GM18951 (cell line): ENCODE measurements at regions of chr3 and their contacts with region 1.

Region 1: DNA sequence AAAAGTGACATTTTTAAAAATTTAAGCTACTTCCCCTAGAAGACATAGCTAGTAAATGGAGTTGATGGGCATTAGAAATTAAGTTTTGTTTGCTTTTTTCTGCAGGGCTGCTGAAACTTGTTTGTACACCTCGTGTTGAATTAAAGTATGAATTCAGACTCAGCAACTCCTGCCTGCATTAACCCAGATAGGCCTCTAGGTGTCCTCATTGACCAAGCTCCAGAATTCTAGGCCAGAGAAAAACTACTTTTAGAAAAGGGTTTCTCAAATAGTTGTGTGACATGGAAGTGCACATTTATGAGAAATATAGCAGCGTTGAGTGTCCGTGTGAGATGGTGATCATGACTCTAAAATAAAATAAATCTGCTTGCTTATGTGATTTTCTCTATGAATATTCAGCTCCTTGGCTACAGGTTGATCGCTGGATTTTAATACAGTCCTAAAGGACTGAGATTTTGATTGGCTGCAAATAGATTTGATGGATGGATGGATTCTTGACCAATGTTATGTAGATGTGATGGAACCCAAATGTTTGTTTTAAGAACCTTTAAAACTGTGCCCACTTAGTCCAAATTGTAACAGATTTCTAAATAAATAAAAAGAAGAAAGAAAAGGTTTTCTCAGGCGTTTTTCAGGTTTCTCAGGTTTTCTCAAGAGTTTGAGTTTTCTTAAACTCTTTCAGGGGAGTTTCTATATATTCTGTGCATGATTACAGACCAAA is 39.4 kb upstream of the LMOD3 start:
- POLR2A ChIP-seq: no peak

Region 2: DNA sequence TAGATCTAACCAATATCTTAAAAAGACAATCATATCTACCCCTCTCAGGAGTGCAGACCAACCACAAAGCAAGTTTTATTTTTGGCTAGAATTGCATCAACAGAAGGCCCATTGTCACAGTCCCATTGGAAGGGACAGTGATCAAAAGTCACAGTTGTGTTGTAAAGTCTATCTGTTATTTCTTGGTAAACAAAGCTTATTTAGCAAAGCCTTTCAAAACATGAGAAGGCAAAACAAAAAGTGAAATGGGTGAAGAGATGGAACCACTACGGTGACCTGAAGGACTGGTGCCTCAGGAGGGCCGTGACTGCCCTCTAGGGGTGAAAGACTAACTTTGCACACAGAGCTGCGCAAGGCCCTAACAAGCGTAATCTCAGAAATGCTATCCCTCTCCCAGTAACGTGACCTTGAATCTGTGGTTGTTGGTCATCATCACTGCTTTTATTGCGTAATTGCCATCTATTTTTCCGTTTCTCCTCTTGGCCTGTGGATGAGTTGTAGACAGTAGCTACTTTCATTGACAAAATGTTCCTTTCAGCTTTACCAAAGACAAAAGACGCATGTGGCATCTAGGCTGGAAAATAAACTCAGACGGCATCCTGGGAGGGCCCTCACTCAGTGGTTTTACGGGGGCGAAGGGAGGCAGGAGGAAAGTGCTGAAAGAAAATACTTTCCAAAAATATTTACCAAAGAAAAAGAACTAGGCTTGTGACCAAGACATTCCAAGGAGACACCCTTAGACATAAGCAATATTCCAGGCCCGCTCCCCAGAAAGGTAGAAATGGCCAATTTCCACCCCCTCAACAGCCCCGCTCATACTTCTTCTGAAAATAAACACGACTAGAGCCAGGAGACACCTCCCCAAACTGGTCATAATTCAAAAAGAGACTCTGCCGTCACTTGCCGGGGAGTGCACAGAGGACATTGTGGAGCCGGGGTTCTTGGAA is 144.8 kb after region 1 on chr3:
- in situ Hi-C with region 1: loop called (anchors 5 kb)
- POLR2A ChIP-seq: no peak

Region 3: DNA sequence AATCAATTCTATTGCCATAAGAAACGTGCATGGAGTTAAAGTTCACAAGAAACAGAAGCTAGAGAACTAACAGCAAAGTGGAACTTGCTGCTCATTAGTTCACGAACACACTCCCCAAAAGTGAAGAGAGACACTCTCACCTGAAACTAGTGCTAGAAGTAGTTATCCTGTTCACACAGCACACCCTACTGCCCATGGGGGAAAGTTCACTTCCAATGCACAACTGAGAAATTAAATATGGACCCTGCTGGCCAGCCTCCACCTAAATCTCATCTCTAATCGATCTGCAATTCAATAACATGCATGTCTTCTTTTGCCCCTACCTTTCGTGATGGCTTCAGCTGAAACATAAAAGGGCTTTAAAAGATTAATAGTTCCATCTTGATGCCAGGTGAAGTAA is 263.5 kb after region 1 on chr3:
- in situ Hi-C with region 1: loop called (anchors 25 kb)
- POLR2A ChIP-seq: no peak

Region 4: GRCh38 chr3:69671082-69671952 is 509.6 kb after region 1 on chr3:
- in situ Hi-C with region 1: loop called (anchors 25 kb)
- POLR2A ChIP-seq: no peak